Left ventricle myocardium inferior (tissue), 1 donor: ENCODE measurements at regions of chr4 and their contacts with region 1.

Region 1: GRCh38 chr4:25439918-25440477 is 62.9 kb downstream of the ANAPC4 start:
- DNase-seq: no peak
- H3K4me3 ChIP-seq: no peak overlapping the region
- H3K27ac ChIP-seq: peak overlapping the region; percentile 41
- H3K4me1 ChIP-seq: peaks cover 13% of the 10 kb centered on the region
- H3K27me3 ChIP-seq: no peaks in the 10 kb centered on the region
- CTCF ChIP-seq: peak; percentile 91

Region 2: DNA sequence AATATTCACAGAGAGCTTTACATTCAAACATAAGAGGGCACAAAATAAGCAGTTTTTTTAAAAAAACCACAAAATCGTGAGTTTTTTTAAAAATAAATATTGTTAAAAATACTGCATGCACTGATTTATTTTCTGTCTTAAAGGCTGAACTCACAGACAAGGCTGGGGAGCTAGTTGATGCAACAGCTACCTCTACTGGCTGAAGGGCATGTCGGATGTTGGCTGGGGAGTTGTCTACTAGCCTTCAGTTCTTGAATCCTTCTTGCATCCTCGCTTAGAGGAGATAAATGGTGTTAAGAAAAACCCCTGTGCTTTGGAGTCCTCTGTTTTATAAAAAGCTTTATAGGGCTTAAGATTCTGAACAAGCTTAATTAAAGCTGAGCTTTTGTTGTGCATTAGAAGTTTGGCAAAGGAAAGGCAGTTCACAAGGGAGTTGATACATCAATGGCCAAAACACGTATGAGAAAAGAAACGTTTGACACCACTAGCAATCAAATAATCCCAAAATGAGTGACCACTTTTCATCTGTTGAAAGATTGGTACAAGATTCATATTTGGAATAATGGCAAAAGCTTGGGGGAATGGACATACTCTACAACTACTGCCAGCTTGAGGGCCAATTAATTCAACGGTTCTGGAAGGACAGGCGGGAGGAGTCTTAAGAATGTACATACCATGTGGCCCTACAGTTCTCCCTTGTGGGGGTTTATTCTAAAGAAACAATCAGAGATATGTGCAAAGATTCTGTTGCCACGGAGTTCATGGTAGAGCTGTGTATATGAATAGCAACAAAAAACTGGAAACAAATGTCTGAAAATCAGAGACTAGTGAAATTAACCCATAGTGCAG is 328.1 kb after region 1 on chr4:
- intact Hi-C with region 1: loop called (anchors 5 kb)
- DNase-seq: peak; percentile 36
- H3K4me3 ChIP-seq: no peak overlapping the region
- H3K27ac ChIP-seq: no peak overlapping the region
- H3K4me1 ChIP-seq: peaks cover 16% of the 10 kb centered on the region
- H3K27me3 ChIP-seq: no peaks in the 10 kb centered on the region
- CTCF ChIP-seq: peak; percentile 83